Activated naive CD8-positive, alpha-beta T cell treated with anti-CD3 and anti-CD28 coated beads, Interleukin-2, amount 10 ng/mL, durations not matched to agents 7 days and 5 days (primary cell): ENCODE measurements at regions of chr20 and their contacts with region 1.

Region 1: DNA sequence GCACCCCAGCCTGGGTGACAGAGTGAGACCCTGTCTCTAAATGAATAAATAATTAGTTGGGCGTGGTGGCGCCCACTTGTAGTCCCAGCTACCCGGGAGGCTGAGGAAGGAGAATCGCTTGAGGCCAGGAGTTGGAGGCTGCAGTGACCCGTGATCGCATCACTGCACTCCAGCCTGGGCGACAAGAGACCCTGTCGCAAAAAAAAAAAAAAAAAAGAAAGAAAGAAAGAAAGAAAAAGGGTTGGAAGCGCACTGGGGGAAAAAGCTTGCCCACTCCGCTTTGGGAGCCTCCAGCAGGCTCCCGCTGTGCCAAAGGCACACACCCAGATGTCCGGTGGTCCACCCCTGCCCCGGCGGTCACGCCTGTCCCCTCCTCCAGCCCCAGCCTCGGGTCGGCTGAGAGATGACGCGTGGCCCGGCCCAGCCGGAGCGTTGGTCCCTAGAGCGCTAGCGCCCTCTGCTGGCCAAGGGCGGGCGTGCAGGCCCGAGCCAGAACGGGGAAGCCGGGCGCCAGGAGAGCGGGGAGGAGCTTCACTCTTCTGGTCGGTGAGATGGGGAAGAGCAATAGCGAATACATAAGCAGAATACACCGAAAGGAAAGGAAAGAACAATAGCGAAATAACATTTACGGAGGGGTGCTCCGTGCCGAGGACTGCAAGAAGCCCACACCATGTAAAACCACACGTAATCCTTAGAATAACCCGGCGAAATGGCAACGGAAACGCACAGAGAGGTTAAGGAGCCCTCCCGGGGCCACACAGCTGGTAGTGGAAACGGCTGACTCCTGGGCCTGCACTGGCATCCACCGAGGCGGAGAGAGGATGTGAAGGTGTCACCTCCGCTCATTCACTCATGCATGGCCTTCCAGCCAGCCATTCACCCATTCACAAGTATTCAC is 41.7 kb downstream of the UBE2V1 start:
- DNase-seq: peak; percentile 99
- ATAC-seq: peak; percentile 97
- H3K4me3 Mint-ChIP-seq: peak overlapping the region; percentile 75
- H3K27ac Mint-ChIP-seq: no peak overlapping the region
- H3K4me1 Mint-ChIP-seq: peaks cover 4% of the 10 kb centered on the region
- H3K27me3 Mint-ChIP-seq: no peaks in the 10 kb centered on the region

Region 2: DNA sequence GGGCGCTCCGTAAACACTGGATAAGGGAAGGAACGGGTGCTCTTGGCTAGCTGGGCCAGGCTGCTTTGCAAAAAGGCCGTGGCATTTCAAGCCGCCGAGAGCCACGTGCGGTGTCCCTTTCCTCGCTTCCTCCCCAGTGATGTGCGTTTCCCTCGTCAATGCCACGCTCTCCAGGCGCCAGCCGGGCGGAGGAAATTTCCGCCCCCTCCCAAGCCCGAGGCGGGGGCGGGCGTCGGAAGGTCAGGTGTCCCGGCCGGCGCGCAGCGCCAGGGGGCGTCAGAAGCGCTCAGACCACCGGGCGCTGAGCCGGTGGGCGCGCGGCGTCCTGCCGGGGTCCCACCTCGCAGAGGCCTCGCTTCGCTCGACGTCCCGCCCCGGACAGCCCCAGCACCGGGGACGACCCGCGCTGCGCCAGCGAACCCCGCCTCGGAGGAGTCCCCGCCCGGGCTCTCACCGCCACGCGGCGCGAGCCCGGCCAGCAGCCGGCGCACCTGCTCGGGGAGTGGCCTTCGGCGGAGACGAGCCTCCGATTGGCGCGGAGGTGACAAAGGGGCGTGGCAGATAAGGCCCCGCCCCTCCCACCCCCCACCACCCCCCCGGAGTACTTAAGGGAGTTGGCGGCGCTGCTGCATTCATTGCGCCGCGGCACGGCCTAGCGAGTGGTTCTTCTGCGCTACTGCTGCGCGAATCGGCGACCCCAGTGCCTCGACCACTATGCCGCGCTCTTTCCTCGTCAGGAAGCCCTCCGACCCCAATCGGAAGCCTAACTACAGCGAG is 88.7 kb before region 1 on chr20 and contains the start of gene SNAI1:
- POLR2A ChIA-PET with region 1: interaction called, 13 read pairs
- DNase-seq: peak; percentile 84
- ATAC-seq: peak; percentile 89
- H3K4me3 Mint-ChIP-seq: peak within 1 kb of the TSS; percentile 63
- H3K27ac Mint-ChIP-seq: peak within 1 kb of the TSS; percentile 25
- H3K4me1 Mint-ChIP-seq: peaks cover 21% of the 10 kb centered on the region
- H3K27me3 Mint-ChIP-seq: peaks cover 13% of the 10 kb centered on the region
- total RNA-seq, gene SNAI1: 0.40 to 0.75 TPM

Region 3: DNA sequence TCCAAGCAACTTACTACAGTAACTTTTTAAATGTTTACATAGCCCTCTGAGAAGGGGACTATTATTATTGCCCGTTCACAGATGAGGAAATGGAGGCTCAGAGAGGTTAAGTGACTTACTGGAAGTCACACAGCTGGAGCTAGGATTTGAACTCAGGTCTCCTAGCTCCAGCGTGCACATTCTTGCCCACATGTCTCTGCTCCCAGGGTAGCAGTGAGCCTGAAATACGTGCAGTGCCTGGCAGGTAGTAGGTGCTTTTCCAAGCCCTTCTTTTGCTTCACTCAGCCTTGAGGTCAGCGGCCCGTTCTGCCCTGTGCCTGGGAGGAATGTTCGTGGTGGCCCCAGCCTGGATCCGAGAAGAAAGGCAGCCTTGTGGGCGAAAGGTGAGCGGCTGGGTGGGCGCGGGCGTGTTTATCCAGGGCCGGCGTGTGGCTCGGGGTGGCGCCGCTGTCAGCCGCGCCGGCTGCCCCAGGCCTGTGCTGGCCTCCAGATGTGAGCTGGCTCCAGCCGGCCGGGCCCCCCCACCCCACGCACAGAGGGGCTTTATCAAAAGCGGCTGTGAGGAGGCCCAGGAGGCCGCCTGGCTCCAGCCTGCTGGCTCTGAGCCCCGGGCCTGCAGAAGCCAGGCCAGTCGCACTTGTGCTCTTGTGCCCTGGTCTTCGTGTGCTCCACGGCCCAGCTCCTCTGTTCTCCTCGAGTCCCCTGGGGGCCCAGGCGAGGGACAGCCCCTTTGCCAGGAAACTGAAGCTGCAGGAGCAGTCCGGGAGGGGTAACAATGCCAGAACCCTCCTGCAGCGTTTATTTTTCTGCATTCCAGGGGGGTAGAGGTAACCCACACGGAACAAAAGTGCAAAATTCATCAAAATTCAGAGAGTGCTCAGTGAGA is 16.4 kb before region 1 on chr20:
- POLR2A ChIA-PET with region 1: no interaction called
- DNase-seq: no peak
- ATAC-seq: no peak
- H3K4me3 Mint-ChIP-seq: no peak overlapping the region
- H3K27ac Mint-ChIP-seq: peak overlapping the region; percentile 9
- H3K4me1 Mint-ChIP-seq: peaks cover 2% of the 10 kb centered on the region
- H3K27me3 Mint-ChIP-seq: peaks cover 9% of the 10 kb centered on the region

Region 4: DNA sequence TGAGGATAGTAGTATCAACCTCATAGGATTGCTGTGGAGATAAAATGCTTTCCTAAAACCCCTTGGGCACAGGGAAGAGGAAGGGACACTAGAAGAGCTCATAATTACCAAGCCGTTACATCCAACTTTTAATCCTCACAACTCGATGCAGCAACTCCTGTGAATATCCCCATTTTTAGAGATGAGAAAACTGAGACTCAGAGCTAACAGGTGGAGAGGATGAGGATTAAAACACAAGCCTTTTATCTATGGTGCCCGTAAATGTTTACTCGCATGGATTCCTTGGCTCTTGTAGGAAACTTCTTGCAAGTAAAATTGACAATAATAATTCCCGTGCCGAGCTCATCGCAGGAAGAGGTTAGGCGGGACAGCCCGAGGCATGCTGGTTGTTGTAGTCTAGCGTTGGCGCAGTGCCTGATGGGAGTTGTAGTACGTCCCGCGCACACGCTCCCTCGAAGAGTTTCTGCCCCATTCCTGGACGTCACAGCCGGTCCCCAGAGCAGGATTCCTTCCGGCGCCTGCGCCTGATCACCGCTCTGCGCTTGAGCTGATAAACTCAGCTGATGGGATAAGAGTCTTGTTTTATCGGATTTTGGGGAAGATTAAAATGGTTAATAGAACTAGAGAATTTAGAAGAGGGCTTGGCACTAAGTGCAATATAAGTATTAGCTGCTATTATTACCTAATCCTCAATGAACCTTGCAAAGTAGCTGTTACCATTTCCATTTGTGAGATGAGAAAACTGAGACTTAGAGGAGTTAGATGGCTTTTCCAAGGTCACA is 44.5 kb after region 1 on chr20:
- POLR2A ChIA-PET with region 1: no interaction called
- DNase-seq: peak; percentile 84
- ATAC-seq: peak; percentile 67
- H3K4me3 Mint-ChIP-seq: peak overlapping the region; percentile 94
- H3K27ac Mint-ChIP-seq: peak overlapping the region; percentile 94
- H3K4me1 Mint-ChIP-seq: peaks cover 42% of the 10 kb centered on the region
- H3K27me3 Mint-ChIP-seq: no peaks in the 10 kb centered on the region